Activated B cell treated with CpG ODN at 0.5 μM for 24 hours (primary cell): ENCODE measurements at regions of chr6 and their contacts with region 1.

Region 1: GRCh38 chr6:32445321-32445854 is 5.7 kb downstream of the HLA-DRA start:
- DNase-seq: no peak
- ATAC-seq: no peak
- H3K4me3 Mint-ChIP-seq: no peak overlapping the region
- H3K27ac Mint-ChIP-seq: peak overlapping the region; percentile 2
- H3K4me1 Mint-ChIP-seq: peaks cover 55% of the 10 kb centered on the region
- H3K27me3 Mint-ChIP-seq: no peaks in the 10 kb centered on the region
- CTCF ChIP-seq: no peak

Region 2: GRCh38 chr6:32462609-32463008 is 17.2 kb after region 1 on chr6:
- CTCF ChIA-PET with region 1: interaction called, 3 read pairs
- POLR2A ChIA-PET with region 1: interaction called, 161 read pairs
- intact Hi-C with region 1: loop called (anchors 2 kb)
- DNase-seq: no peak
- ATAC-seq: peak; percentile 71
- H3K4me3 Mint-ChIP-seq: peak overlapping the region; percentile 69
- H3K27ac Mint-ChIP-seq: peak overlapping the region; percentile 76
- H3K4me1 Mint-ChIP-seq: peaks cover 22% of the 10 kb centered on the region
- H3K27me3 Mint-ChIP-seq: no peaks in the 10 kb centered on the region
- CTCF ChIP-seq: no peak

Region 3: GRCh38 chr6:32472781-32473375 is 27.5 kb after region 1 on chr6:
- CTCF ChIA-PET with region 1: no interaction called
- POLR2A ChIA-PET with region 1: interaction called, 31 read pairs
- intact Hi-C with region 1: loop called (anchors 2 kb)
- DNase-seq: no peak
- ATAC-seq: peak; percentile 16
- H3K4me3 Mint-ChIP-seq: peak overlapping the region; percentile 80
- H3K27ac Mint-ChIP-seq: peak overlapping the region; percentile 99
- H3K4me1 Mint-ChIP-seq: peaks cover 36% of the 10 kb centered on the region
- H3K27me3 Mint-ChIP-seq: no peaks in the 10 kb centered on the region
- CTCF ChIP-seq: no peak

Region 4: GRCh38 chr6:32483968-32484636 is 38.7 kb after region 1 on chr6:
- CTCF ChIA-PET with region 1: no interaction called
- POLR2A ChIA-PET with region 1: interaction called, 17 read pairs
- intact Hi-C with region 1: no loop called
- DNase-seq: no peak
- ATAC-seq: no peak
- H3K4me3 Mint-ChIP-seq: no peak overlapping the region
- H3K27ac Mint-ChIP-seq: peak overlapping the region; percentile 41
- H3K4me1 Mint-ChIP-seq: peaks cover 25% of the 10 kb centered on the region
- H3K27me3 Mint-ChIP-seq: no peaks in the 10 kb centered on the region
- CTCF ChIP-seq: no peak